K562 (cell line): ENCODE measurements at regions of chr15 and their contacts with region 1.

Region 1: GRCh38 chr15:45027220-45027619 is 4.2 kb downstream of the SORD start:
- DNase-seq: peak in 2 of 4 experiments; percentile 41 to 55
- ATAC-seq: peak; percentile 10; the same call in 1 of the 3 replicates
- H3K4me3 ChIP-seq: no peak overlapping the region
- H3K27ac ChIP-seq: peak overlapping the region; percentile 33
- H3K4me1 ChIP-seq: peaks cover 19 to 36% of the 10 kb centered on the region in 2 experiments; a peak in 4 of 5 replicates
- H3K27me3 ChIP-seq: no peaks in the 10 kb centered on the region
- CTCF ChIP-seq: no peak
- EP300 ChIP-seq: no peak
- POLR2A ChIP-seq: no peak
- RAD21 ChIP-seq: no peak

Region 2: DNA sequence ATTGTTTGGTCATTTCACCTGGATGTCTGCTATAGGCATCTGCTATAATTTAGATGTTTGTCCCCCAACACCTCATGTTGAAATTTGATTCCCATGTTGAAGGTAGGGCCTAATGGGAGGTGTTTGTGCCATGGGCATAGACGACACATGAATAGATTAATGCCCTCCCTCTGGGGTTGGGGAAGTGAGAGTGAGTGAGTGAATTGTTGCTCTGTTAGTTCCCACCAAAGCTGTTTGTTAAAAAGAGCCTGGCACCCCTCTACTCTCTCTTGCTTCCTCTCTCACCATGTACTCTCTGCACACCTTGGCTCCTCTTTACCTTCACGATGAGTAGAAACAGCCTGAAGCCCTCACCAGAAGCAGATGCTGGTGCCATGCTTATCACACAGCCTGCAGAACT is 28.1 kb before region 1 on chr15:
- CTCF ChIA-PET with region 1: no interaction called
- POLR2A ChIA-PET with region 1: no interaction called
- in situ Hi-C with region 1: no loop called
- intact Hi-C with region 1: loop called (anchors 5 kb)
- DNase-seq: no peak
- ATAC-seq: no peak
- H3K4me3 ChIP-seq: no peak overlapping the region
- H3K27ac ChIP-seq: no peak overlapping the region
- H3K4me1 ChIP-seq: no peaks in the 10 kb centered on the region
- H3K27me3 ChIP-seq: no peaks in the 10 kb centered on the region
- CTCF ChIP-seq: no peak
- EP300 ChIP-seq: no peak
- POLR2A ChIP-seq: no peak
- RAD21 ChIP-seq: no peak